ENCODE measurements at regions of chr11 and their contacts with region 1.

Region 1: GRCh38 chr11:87173185-87174039 is 135.7 kb downstream of the TMEM135 start:
- DNase-seq: peak; percentile 94
- H3K4me3 ChIP-seq: no peak overlapping the region
- H3K27ac ChIP-seq: peak overlapping the region; percentile 71
- H3K4me1 ChIP-seq: peaks cover 41% of the 10 kb centered on the region
- H3K27me3 ChIP-seq: no peaks in the 10 kb centered on the region
- CTCF ChIP-seq: no peak

Region 2: DNA sequence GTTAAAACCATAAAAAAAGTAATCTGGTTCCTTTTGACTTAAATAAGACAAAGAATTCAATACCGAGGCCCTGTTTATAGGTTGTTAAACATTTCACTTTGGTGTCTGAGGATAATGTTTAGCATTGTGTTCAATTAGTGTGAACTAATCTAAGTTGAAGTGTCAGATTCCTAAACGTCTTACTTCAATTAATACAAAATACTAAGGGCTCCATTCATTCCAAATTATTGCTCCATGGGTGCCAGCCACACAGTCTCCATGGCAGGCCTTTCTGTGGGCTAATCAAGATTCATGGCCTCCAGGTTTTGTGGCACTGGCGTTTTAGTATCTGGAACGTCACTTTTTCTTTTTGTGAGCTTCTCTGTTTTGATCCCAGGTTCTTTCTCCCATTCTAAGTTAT is 46.3 kb before region 1 on chr11:
- CTCF ChIA-PET with region 1: no interaction called
- POLR2A ChIA-PET with region 1: no interaction called
- intact Hi-C with region 1: loop called (anchors 1 kb)
- DNase-seq: peak; percentile 89
- H3K4me3 ChIP-seq: no peak overlapping the region
- H3K27ac ChIP-seq: peak overlapping the region; percentile 3
- H3K4me1 ChIP-seq: peaks cover 62% of the 10 kb centered on the region
- H3K27me3 ChIP-seq: no peaks in the 10 kb centered on the region
- CTCF ChIP-seq: no peak

Region 3: DNA sequence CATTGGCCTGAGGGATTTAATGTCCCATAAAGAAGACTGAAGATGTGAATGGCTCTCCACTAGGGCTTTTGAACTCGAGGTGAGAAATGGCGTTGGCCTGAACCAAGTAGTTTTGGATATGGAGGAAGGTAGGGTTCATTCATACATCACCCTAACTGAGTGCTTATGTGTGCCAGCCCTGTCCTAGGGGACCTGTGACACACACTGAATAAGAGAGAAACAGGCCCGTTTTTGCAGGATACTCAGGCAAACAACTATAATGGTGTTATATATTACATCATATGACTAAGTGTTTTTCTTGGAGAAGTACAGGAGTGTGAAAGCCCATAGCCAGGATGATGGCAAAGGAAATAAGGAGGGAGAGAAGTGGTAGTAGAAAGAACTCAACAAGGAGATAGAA is 232.4 kb after region 1 on chr11:
- CTCF ChIA-PET with region 1: no interaction called
- POLR2A ChIA-PET with region 1: no interaction called
- intact Hi-C with region 1: no loop called
- DNase-seq: no peak
- H3K4me3 ChIP-seq: no peak overlapping the region
- H3K27ac ChIP-seq: no peak overlapping the region
- H3K4me1 ChIP-seq: no peaks in the 10 kb centered on the region
- H3K27me3 ChIP-seq: no peaks in the 10 kb centered on the region
- CTCF ChIP-seq: no peak

Region 4: GRCh38 chr11:87501388-87501787 is 328.0 kb after region 1 on chr11:
- CTCF ChIA-PET with region 1: no interaction called
- POLR2A ChIA-PET with region 1: no interaction called
- intact Hi-C with region 1: no loop called
- DNase-seq: peak; percentile 6
- H3K4me3 ChIP-seq: no peak overlapping the region
- H3K27ac ChIP-seq: no peak overlapping the region
- H3K4me1 ChIP-seq: no peaks in the 10 kb centered on the region
- H3K27me3 ChIP-seq: no peaks in the 10 kb centered on the region
- CTCF ChIP-seq: 0 out of 2 replicates have a peak, but pooled peaks have one; percentile 22

Region 5: DNA sequence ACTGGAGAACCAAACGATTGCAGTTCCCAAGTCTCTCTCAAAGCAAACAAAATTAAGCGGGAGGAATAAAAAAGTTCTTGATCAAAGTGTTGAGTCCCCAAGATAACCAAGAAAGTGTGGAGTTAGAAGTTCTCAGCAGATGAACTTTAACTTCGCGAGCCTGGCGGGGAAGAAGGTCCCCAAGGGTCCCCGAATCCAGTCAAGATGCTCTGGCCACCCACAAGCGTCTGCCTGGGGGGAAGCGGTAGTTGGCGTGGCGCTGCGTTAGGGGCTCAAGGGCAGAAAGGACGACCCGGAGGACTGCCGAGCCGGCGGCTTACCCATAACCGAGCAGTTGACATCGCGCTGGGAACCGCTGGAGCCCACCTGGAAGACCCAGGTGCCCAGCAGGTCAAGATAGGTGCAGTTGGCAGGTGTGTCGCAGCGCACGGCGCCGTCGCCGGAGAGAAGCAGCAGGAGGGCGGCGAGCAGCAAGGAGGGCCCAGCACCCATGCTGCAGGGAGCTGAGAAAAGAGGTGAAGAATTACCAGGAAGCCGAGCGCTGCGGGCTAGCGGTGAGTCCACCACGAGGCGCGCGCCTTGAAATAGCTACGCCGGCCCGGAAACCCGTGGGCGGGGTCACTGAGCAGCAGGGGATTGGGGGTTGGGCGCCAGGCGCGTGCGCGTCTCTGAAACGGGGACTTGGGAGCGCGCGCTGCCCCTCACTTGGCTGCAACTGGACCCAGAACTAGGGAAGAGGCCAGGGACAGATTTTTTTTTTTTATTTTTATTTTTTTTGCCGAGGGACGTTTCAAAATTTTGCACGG is 1164.0 kb after region 1 on chr11 and contains the start of gene CTSC:
- CTCF ChIA-PET with region 1: no interaction called
- POLR2A ChIA-PET with region 1: interaction called, 12 read pairs
- intact Hi-C with region 1: no loop called
- DNase-seq: peak; percentile 95
- H3K4me3 ChIP-seq: peak within 1 kb of the TSS; percentile 87
- H3K27ac ChIP-seq: peak within 1 kb of the TSS; percentile 84
- H3K4me1 ChIP-seq: peaks cover 7% of the 10 kb centered on the region
- H3K27me3 ChIP-seq: no peaks in the 10 kb centered on the region
- CTCF ChIP-seq: no peak
- total RNA-seq, gene CTSC: 86.4 and 116 TPM in 2 replicates

Measured in A673 (cell line).